ENCODE measurements at regions of chr10 and their contacts with region 1.

Region 1: GRCh38 chr10:79195091-79195923 is 126.5 kb downstream of the ZMIZ1 start:
- DNase-seq: peak; percentile 96
- H3K4me3 ChIP-seq: peak overlapping the region in 1 of 8 donors; percentile 9
- H3K27ac ChIP-seq: peak overlapping the region in 5 of 8 donors; percentile 54 to 95 (median 81)
- H3K4me1 ChIP-seq: peaks cover 14 to 80% (median 53%) of the 10 kb centered on the region in 6 donors
- H3K27me3 ChIP-seq: peaks cover 0 to 5% (median 0%) of the 10 kb centered on the region in 7 donors
- CTCF ChIP-seq: peak; percentile 82 to 98 (median 94)
- POLR2A ChIP-seq: no peak

Region 2: DNA sequence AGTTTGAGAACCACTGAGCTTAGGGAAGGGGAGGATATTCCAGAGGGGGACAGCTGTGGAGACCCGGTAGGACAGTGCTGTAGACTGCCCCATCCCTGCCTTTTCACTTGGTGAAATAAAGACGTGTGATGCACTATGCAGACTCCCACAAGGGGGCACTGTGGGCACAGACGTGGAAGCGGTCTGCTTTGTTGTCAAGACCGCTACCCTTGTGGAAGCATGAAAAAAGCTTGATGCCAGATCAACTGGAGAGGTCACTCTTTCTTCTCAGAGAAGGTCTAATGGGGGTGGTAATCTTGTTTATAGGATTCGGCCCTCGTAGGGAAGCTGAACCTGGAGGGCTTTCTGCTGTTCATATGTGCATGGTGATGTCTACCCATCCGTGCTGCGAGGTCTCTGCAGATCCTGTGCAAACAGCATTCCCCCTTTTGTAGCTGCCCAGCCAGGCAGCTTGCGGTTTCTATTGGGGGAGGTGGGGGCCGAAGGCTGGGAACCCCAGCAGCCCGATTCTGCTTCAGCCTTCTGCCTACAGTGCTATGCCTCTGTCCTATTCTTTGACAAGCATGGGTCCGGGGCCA is 1147.9 kb before region 1 on chr10:
- intact Hi-C with region 1: loop called (anchors 5 kb)
- DNase-seq: peak; percentile 94
- H3K4me3 ChIP-seq: no peak overlapping the region
- H3K27ac ChIP-seq: no peak overlapping the region
- H3K4me1 ChIP-seq: peaks cover 0 to 35% (median 15%) of the 10 kb centered on the region in 6 donors
- H3K27me3 ChIP-seq: no peaks in the 10 kb centered on the region
- CTCF ChIP-seq: peak; percentile 64 to 88 (median 82)
- POLR2A ChIP-seq: no peak

Region 3: GRCh38 chr10:78727728-78728127 is 467.6 kb before region 1 on chr10:
- intact Hi-C with region 1: no loop called
- DNase-seq: no peak
- H3K4me3 ChIP-seq: no peak overlapping the region
- H3K27ac ChIP-seq: no peak overlapping the region
- H3K4me1 ChIP-seq: peaks cover 0 to 14% (median 3%) of the 10 kb centered on the region in 6 donors
- H3K27me3 ChIP-seq: peaks cover 0 to 6% (median 0%) of the 10 kb centered on the region in 7 donors
- CTCF ChIP-seq: no peak
- POLR2A ChIP-seq: no peak

Region 4: GRCh38 chr10:78892293-78893176 is 302.8 kb before region 1 on chr10:
- intact Hi-C with region 1: no loop called
- DNase-seq: no peak
- H3K4me3 ChIP-seq: no peak overlapping the region
- H3K27ac ChIP-seq: peak overlapping the region in 1 of 8 donors; percentile 10
- H3K4me1 ChIP-seq: peaks cover 0 to 12% (median 0%) of the 10 kb centered on the region in 6 donors
- H3K27me3 ChIP-seq: peaks cover 0 to 4% (median 0%) of the 10 kb centered on the region in 7 donors
- CTCF ChIP-seq: no peak
- POLR2A ChIP-seq: no peak

Region 5: DNA sequence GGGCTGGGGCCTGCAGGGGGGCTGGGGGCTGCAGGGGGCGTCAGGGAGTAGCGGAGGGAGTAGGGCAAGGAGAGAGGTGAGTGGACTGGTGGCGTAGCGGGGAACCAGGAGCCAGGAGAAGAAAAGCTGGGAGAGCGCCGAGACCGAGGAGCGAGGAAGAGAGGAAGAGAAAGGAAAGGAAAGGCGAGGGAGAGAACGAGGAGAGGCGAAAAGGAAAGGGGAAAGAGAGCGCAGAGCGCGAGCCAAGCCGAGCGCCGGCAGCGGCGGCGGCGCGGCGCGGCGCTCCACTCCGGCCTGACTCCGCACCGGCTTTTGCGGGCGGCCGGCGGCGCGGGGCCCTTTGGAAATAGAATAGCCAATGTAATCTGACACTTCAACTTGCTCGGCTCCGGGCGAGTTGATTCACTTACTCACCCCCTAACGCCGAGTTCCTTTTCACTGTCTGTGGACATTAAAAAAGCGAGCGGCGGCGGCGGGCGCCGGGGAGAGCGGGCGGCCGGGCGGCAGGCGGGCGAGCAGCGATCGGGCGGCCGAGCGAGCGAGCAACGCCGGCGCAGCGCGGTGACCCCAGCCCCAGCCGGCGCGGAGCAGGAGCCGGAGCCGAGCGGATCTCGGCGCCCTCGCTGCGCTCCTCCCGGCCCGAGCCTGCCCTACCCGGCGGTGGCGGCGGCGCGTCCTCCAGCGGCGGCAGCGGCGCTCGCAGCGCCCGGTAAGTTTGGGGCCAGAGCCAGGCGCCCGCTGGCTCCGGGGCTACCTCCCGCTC is 126.6 kb before region 1 on chr10 and contains the start of gene ZMIZ1:
- intact Hi-C with region 1: loop called (anchors 5 kb)
- DNase-seq: peak; percentile 95
- H3K4me3 ChIP-seq: peak within 1 kb of the TSS; percentile 65 to 88 (median 76)
- H3K27ac ChIP-seq: peak within 1 kb of the TSS; percentile 76 to 96 (median 94)
- H3K4me1 ChIP-seq: peaks cover 18 to 69% (median 57%) of the 10 kb centered on the region in 6 donors
- H3K27me3 ChIP-seq: peaks cover 0 to 29% (median 3%) of the 10 kb centered on the region in 7 donors
- CTCF ChIP-seq: no peak
- POLR2A ChIP-seq: peak in 2 of 3 donors; percentile 64 to 65
- total RNA-seq, gene ZMIZ1: 117 to 210 (median 129) TPM

Region 6: GRCh38 chr10:79149662-79150443 is 45.5 kb before region 1 on chr10:
- intact Hi-C with region 1: loop called (anchors 2 kb)
- DNase-seq: peak; percentile 94
- H3K4me3 ChIP-seq: peak overlapping the region in 1 of 8 donors; percentile 33
- H3K27ac ChIP-seq: peak overlapping the region; percentile 77 to 95 (median 88)
- H3K4me1 ChIP-seq: peaks cover 58 to 100% (median 94%) of the 10 kb centered on the region in 6 donors
- H3K27me3 ChIP-seq: no peaks in the 10 kb centered on the region
- CTCF ChIP-seq: no peak
- POLR2A ChIP-seq: no peak

Measured in spleen (tissue), 13 donors.